Heart left ventricle (tissue), 16 donors: ENCODE measurements at regions of chr4 and their contacts with region 1.

Region 1: DNA sequence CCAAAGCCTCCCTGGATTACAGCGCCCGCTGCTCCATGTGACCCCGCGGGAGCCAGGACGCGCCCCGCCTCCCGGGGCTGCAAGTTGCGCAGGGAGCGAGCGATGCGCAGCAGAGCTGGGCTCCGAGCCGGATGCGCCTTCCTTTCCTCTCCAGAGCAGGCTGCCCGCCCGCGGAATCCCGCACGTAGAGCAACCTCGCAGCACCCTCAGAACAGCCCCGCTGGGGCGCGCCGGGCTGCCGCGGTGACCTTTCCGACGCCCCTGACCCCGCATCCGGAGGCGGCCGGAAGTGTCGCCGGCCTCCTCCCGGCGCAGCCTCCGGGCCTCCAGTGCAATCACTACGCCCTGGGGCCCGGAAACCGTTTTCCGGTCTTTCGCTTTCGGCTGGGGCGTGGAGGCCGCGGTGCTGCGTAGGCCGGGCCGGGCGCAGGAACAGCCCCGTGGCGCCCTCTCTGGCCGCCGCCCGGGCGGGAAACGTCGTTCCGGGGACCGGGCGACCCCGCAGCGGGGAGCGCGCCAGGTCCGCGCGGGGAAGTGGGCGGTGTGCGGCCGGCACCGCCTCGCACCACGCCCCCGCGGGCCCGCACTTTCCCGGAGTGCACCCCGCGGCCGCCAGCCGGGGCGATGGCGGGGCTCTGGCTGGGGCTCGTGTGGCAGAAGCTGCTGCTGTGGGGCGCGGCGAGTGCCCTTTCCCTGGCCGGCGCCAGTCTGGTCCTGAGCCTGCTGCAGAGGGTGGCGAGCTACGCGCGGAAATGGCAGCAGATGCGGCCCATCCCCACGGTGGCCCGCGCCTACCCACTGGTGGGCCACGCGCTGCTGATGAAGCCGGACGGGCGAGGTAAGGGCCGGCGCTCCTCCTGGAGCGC is at the start of gene CYP4V2:
- DNase-seq: peak; percentile 86 to 93 (median 90)
- ATAC-seq: peak; percentile 74 to 90 (median 85)
- H3K4me3 ChIP-seq: peak within 1 kb of the TSS; percentile 54 to 98 (median 90)
- H3K27ac ChIP-seq: peak within 1 kb of the TSS; percentile 88 to 99 (median 98)
- H3K4me1 ChIP-seq: peaks cover 6 to 39% (median 30%) of the 10 kb centered on the region in 12 donors
- H3K27me3 ChIP-seq: no peaks in the 10 kb centered on the region
- CTCF ChIP-seq: peak; percentile 5 to 62 (median 42)
- POLR2A ChIP-seq: no peak
- total RNA-seq, gene CYP4V2: 15.8 to 44.6 (median 28.6) TPM

Region 2: DNA sequence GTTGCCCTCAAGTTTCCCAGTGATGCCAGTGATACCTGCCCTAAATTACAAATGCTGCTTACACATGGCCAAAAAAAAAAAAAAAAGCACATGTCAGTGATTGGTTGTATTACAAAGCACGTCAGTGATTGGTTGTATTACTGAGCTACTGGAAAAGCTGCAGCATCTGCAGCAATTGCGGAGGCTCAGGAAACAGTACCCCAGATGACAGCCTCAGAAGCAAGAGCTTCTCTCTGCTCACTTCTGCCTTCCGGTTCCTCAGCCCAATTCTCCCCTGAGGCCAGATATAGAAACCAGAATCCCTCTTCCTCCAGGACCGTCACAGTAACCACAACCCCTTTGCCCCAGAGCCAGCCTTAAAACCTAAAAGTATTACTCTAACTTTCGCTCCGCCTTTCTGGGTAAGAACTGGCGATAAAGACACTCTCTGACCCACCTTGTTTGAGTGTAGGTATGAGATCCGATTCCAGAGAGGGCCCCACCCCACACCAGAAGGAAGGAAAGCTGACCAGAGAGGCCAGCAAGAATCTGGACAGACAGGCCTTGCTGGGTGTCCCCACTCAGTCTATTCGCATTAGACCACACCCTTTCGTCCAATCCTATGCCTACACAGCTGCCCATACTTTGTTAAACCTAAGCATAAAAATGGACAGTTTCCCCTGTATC is 294.5 kb before region 1 on chr4:
- intact Hi-C with region 1: no loop called
- DNase-seq: no peak
- ATAC-seq: no peak
- H3K4me3 ChIP-seq: no peak overlapping the region
- H3K27ac ChIP-seq: no peak overlapping the region
- H3K4me1 ChIP-seq: no peaks in the 10 kb centered on the region
- H3K27me3 ChIP-seq: no peaks in the 10 kb centered on the region
- CTCF ChIP-seq: no peak
- POLR2A ChIP-seq: no peak

Region 3: DNA sequence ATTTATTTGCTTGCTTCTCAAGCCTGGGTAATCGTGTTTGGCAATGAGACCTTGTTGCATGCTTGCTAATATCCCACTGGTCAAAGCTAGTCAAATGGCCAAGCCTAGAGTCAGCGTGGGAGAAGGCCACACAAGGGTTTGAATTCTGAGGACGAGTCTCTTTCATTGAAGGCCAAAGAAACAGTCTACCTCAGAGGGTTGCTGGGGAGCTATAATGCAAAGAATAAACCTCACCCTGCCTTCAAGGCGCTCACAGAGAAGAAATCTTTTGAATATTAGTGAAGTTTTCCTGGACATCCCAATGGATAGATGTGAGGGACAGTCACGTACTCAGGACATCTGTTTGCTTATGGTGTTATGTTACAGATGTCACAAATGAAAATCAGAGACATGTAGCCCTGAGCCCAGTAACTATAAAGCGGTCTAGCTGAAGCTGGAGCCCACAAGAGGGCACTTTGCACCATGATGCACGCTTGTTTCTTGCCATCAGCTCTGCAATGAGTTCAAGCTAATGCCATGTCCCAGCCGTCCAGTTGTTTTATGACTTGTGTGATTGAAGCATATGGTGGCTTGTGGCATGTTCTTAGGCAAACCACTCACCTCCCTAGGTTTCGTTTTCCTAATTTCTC is 123.6 kb before region 1 on chr4:
- intact Hi-C with region 1: loop called in 2 of 10 experiments (anchors 5 kb)
- DNase-seq: peak in 4 of 5 donors; percentile 50 to 62 (median 55)
- ATAC-seq: peak; percentile 71 to 92 (median 91)
- H3K4me3 ChIP-seq: peak overlapping the region; percentile 19 to 71 (median 60)
- H3K27ac ChIP-seq: peak overlapping the region in 6 of 12 donors; percentile 46 to 79 (median 72)
- H3K4me1 ChIP-seq: peaks cover 0 to 20% (median 4%) of the 10 kb centered on the region in 12 donors
- H3K27me3 ChIP-seq: no peaks in the 10 kb centered on the region
- CTCF ChIP-seq: peak; percentile 35 to 65 (median 53)
- POLR2A ChIP-seq: no peak

Region 4: DNA sequence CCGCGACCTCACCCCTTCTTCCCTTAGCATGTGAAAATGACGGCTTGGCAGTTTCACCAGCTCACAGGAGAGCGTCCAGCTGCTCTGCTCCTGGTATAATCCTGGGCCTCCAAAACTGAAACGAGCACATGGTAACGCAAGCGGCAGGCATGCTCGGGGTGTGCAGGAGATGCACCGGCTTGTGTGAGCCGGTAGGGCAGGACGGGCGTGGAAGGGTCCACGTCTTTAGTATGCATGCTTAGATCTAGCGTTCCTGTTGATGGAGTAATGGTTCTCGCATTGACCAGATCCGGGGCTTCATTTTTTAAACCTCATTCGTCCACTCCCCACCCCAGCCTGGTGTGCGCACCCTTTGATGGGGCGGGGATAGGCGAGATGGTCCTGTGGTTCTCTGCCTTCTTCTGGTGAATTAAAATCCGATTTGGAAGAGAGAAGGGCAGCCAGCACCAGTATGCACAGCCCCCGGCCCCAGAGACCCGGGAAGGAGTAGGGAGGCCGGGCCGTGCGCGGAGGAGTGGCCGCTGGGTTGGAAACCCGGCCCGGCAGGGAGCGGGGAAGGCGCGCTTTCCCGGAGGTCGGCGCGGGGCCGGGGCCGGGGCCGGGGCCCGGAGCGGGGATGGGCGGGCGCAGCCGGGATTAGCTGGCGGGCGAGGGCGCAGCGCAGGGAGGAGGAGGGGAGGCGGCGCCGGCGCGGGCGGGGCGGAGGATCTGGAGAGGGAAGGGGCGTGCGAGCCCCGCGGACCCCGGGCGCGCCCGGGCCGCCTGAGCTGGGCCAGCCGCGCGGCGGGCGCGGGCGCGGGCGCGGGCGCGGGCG is 47.1 kb before region 1 on chr4:
- intact Hi-C with region 1: loop called in 3 of 10 experiments (anchors 5 to 10 kb)
- DNase-seq: peak; percentile 65 to 78 (median 69)
- ATAC-seq: peak; percentile 40 to 86 (median 73)
- H3K4me3 ChIP-seq: peak overlapping the region; percentile 35 to 81 (median 62)
- H3K27ac ChIP-seq: peak overlapping the region in 11 of 12 donors; percentile 52 to 86 (median 74)
- H3K4me1 ChIP-seq: peaks cover 0 to 19% (median 8%) of the 10 kb centered on the region in 12 donors
- H3K27me3 ChIP-seq: peaks cover 0 to 24% (median 0%) of the 10 kb centered on the region in 9 donors
- CTCF ChIP-seq: peak in 3 of 12 donors; percentile 16 to 28 (median 17)
- POLR2A ChIP-seq: no peak